Naive thymus-derived CD4-positive, alpha-beta T cell (primary cell): ENCODE measurements at regions of chr3 and their contacts with region 1.

Region 1: DNA sequence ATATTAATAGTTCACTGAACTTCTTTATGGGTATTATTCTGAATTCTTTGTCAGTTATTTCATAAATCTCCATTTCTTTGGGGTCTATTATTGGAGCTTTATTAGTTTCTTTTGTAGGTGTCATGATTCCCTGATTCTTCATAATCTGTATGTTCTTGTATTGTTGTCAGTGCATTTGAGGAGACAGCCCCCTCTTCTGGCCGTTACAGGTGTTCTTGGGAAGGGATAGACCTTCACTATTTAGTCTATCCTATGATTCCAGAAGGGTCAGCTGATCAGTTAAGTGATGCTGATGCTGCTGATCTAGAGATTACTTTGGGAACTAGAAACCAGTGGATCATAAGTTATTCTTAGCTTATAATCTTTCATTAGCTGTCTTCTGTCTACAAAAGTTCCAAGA is 34.9 kb downstream of the TMEM39A start:
- DNase-seq: no peak
- ATAC-seq: no peak
- H3K4me3 ChIP-seq: no peak overlapping the region
- H3K4me3 Mint-ChIP-seq: no peak overlapping the region
- H3K27ac ChIP-seq: no peak overlapping the region
- H3K27ac Mint-ChIP-seq: no peak overlapping the region
- H3K4me1 ChIP-seq: no peaks in the 10 kb centered on the region
- H3K4me1 Mint-ChIP-seq: no peaks in the 10 kb centered on the region
- H3K27me3 ChIP-seq: no peaks in the 10 kb centered on the region
- H3K27me3 Mint-ChIP-seq: peaks cover 0 to 2% (median 0%) of the 10 kb centered on the region in 5 donors

Region 2: DNA sequence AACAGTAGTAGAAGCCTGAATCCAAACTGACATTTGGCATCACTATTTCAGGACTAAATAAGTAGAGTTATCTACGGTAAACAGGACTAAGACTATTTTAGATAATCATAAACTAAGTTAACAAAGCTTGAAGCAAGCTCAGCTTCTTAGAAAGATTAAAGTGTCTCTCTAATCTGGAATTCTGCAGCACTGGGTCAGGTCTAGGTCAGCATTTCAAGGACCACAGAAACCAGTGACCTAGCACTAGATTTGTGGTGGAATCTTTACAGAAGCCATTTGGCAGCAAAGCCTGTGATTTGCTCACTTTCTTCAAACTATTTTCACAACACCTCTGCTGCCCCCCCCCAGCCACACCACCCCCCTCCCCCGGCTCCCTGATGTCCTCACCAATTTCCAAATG is 431.3 kb before region 1 on chr3:
- CTCF ChIA-PET with region 1: no interaction called
- POLR2A ChIA-PET with region 1: no interaction called
- intact Hi-C with region 1: no loop called
- DNase-seq: no peak
- ATAC-seq: no peak
- H3K4me3 ChIP-seq: no peak overlapping the region
- H3K4me3 Mint-ChIP-seq: no peak overlapping the region
- H3K27ac ChIP-seq: no peak overlapping the region
- H3K27ac Mint-ChIP-seq: no peak overlapping the region
- H3K4me1 ChIP-seq: no peaks in the 10 kb centered on the region
- H3K4me1 Mint-ChIP-seq: no peaks in the 10 kb centered on the region
- H3K27me3 ChIP-seq: no peaks in the 10 kb centered on the region
- H3K27me3 Mint-ChIP-seq: no peaks in the 10 kb centered on the region

Region 3: GRCh38 chr3:119401503-119402372 is 26.8 kb before region 1 on chr3:
- CTCF ChIA-PET with region 1: no interaction called
- POLR2A ChIA-PET with region 1: no interaction called
- intact Hi-C with region 1: no loop called
- DNase-seq: no peak
- ATAC-seq: no peak
- H3K4me3 ChIP-seq: no peak overlapping the region
- H3K4me3 Mint-ChIP-seq: no peak overlapping the region
- H3K27ac ChIP-seq: no peak overlapping the region
- H3K27ac Mint-ChIP-seq: peak overlapping the region in 1 of 9 donors; percentile 72
- H3K4me1 ChIP-seq: no peaks in the 10 kb centered on the region
- H3K4me1 Mint-ChIP-seq: peaks cover 0 to 15% (median 0%) of the 10 kb centered on the region in 7 donors
- H3K27me3 ChIP-seq: no peaks in the 10 kb centered on the region
- H3K27me3 Mint-ChIP-seq: no peaks in the 10 kb centered on the region

Region 4: GRCh38 chr3:119443179-119443578 is 14.6 kb after region 1 on chr3:
- CTCF ChIA-PET with region 1: no interaction called
- POLR2A ChIA-PET with region 1: no interaction called
- intact Hi-C with region 1: loop called in 1 of 2 experiments (anchors 2 kb)
- DNase-seq: no peak
- ATAC-seq: no peak
- H3K4me3 ChIP-seq: no peak overlapping the region
- H3K4me3 Mint-ChIP-seq: no peak overlapping the region
- H3K27ac ChIP-seq: no peak overlapping the region
- H3K27ac Mint-ChIP-seq: peak overlapping the region in 1 of 9 donors; percentile 17
- H3K4me1 ChIP-seq: no peaks in the 10 kb centered on the region
- H3K4me1 Mint-ChIP-seq: peaks cover 0 to 9% (median 0%) of the 10 kb centered on the region in 7 donors
- H3K27me3 ChIP-seq: no peaks in the 10 kb centered on the region
- H3K27me3 Mint-ChIP-seq: no peaks in the 10 kb centered on the region